CD4-positive, alpha-beta memory T cell (primary cell): ENCODE measurements at regions of chr13 and their contacts with region 1.

Region 1: DNA sequence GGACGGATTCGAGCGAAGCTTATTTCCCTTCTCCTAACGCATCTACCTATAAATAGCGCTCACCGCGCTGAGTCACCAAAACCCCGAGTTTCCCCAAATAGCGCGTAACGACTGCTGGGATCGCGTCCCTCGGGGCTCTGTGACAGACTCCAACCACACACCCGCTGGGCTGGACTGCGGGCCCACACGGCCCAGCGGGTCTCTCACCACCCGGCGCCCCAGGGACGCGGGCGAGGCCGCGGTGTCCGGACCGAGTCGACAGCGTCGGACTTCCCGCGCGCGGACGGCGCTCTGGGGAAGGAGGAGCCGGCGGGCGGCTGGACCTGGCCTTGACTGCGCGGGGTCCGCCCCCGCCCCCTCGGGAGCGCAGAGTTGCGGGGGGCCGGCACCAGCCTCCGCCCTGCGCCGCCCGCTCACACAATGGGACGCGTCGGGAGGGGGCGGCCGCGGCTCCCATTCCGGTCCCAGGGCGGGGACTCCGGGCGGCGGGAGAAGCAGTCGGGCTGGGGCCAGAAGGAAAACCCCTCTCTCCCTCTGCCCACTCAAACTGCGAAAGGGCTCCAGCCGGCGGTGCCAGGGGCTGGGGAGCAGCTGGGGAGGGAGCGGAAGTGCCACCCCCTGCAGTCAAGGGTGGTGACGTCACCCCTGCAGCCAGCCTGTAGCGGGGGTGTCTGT is 108.8 kb downstream of the KCNRG start:
- DNase-seq: peak in 4 of 5 donors; percentile 67 to 93 (median 74)
- H3K4me3 ChIP-seq: peak overlapping the region; percentile 48 to 92
- H3K4me3 Mint-ChIP-seq: peak overlapping the region; percentile 84 to 97 (median 91)
- H3K27ac ChIP-seq: peak overlapping the region; percentile 98
- H3K27ac Mint-ChIP-seq: peak overlapping the region; percentile 94 to 99 (median 97)
- H3K4me1 ChIP-seq: peaks cover 64% of the 10 kb centered on the region
- H3K4me1 Mint-ChIP-seq: peaks cover 36 to 70% (median 55%) of the 10 kb centered on the region in 4 donors
- H3K27me3 ChIP-seq: no peaks in the 10 kb centered on the region
- H3K27me3 Mint-ChIP-seq: peaks cover 3 to 10% of the 10 kb centered on the region in 2 donors

Region 2: DNA sequence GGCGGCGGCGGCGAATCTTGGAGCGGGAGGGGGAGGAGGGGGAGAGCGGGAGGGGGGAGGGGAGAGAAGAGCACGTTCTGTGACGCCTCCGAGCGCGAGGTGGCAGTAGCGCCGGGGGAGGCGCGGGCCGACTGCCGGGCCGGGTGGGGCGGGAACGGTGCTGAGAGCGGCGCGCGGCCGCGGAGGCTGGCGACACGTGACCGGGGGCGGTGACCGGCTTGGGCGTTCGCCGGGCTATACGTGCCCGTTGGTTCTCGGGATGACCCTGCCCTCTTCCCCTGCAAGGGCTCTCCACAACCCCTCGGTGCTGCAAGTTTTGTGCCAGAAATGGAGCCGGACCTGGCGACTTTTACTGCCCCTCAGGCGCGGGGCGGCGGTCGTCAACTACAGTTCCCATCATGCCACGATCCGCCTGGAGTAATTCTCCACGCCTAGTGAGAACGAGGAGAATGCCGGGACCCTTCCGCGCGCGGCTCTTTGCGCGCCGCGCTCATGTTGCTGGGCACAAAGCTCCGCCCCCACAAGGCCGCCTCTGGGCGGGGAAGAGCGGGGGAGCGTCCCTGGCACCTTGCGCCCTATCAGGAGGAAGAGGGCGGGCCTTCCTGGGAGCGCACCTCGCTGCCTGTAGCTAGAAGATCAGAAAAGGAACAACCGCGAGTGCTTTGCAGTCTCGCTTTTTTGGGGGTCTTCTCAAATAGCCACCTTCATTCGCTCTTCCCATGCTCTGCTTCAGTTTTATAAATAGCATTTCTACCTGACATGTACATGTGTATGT is 331.3 kb before region 1 on chr13 and contains the start of gene KPNA3:
- CTCF ChIA-PET with region 1: no interaction called
- POLR2A ChIA-PET with region 1: interaction called, 13 read pairs
- intact Hi-C with region 1: loop called (anchors 2 kb)
- DNase-seq: peak; percentile 94 to 96 (median 95)
- H3K4me3 ChIP-seq: peak within 1 kb of the TSS; percentile 74 to 80
- H3K4me3 Mint-ChIP-seq: peak within 1 kb of the TSS; percentile 96 to 99 (median 97)
- H3K27ac ChIP-seq: peak within 1 kb of the TSS; percentile 74
- H3K27ac Mint-ChIP-seq: peak within 1 kb of the TSS; percentile 92 to 98 (median 98)
- H3K4me1 ChIP-seq: peaks cover 37% of the 10 kb centered on the region
- H3K4me1 Mint-ChIP-seq: peaks cover 22 to 42% (median 36%) of the 10 kb centered on the region in 4 donors
- H3K27me3 ChIP-seq: no peaks in the 10 kb centered on the region
- H3K27me3 Mint-ChIP-seq: peaks cover 0 to 5% of the 10 kb centered on the region in 2 donors
- total RNA-seq, gene KPNA3: 21.1 to 22.4 TPM

Region 3: GRCh38 chr13:49954674-49955491 is 169.1 kb before region 1 on chr13:
- CTCF ChIA-PET with region 1: no interaction called
- POLR2A ChIA-PET with region 1: no interaction called
- intact Hi-C with region 1: no loop called
- DNase-seq: no peak
- H3K4me3 ChIP-seq: no peak overlapping the region
- H3K4me3 Mint-ChIP-seq: no peak overlapping the region
- H3K27ac ChIP-seq: no peak overlapping the region
- H3K27ac Mint-ChIP-seq: no peak overlapping the region
- H3K4me1 ChIP-seq: no peaks in the 10 kb centered on the region
- H3K4me1 Mint-ChIP-seq: no peaks in the 10 kb centered on the region
- H3K27me3 ChIP-seq: no peaks in the 10 kb centered on the region
- H3K27me3 Mint-ChIP-seq: peaks cover 3 to 4% of the 10 kb centered on the region in 2 donors

Region 4: GRCh38 chr13:50090212-50090611 is 33.8 kb before region 1 on chr13:
- CTCF ChIA-PET with region 1: interaction called, 252 read pairs
- POLR2A ChIA-PET with region 1: interaction called, 648 read pairs
- intact Hi-C with region 1: no loop called
- DNase-seq: no peak
- H3K4me3 ChIP-seq: no peak overlapping the region
- H3K4me3 Mint-ChIP-seq: no peak overlapping the region
- H3K27ac ChIP-seq: no peak overlapping the region
- H3K27ac Mint-ChIP-seq: no peak overlapping the region
- H3K4me1 ChIP-seq: peaks cover 27% of the 10 kb centered on the region
- H3K4me1 Mint-ChIP-seq: peaks cover 6 to 22% (median 8%) of the 10 kb centered on the region in 4 donors
- H3K27me3 ChIP-seq: no peaks in the 10 kb centered on the region
- H3K27me3 Mint-ChIP-seq: no peaks in the 10 kb centered on the region

Region 5: GRCh38 chr13:50152655-50153309 is 28.8 kb after region 1 on chr13:
- CTCF ChIA-PET with region 1: interaction called, 3 read pairs
- POLR2A ChIA-PET with region 1: interaction called, 23 read pairs
- intact Hi-C with region 1: loop called (anchors 2 kb)
- DNase-seq: peak in 1 of 5 donors; percentile 6
- H3K4me3 ChIP-seq: peak overlapping the region; percentile 25 to 27
- H3K4me3 Mint-ChIP-seq: peak overlapping the region; percentile 72 to 94 (median 84)
- H3K27ac ChIP-seq: peak overlapping the region; percentile 8
- H3K27ac Mint-ChIP-seq: peak overlapping the region; percentile 49 to 88 (median 81)
- H3K4me1 ChIP-seq: peaks cover 26% of the 10 kb centered on the region
- H3K4me1 Mint-ChIP-seq: peaks cover 17 to 27% (median 22%) of the 10 kb centered on the region in 4 donors
- H3K27me3 ChIP-seq: no peaks in the 10 kb centered on the region
- H3K27me3 Mint-ChIP-seq: no peaks in the 10 kb centered on the region

Region 6: DNA sequence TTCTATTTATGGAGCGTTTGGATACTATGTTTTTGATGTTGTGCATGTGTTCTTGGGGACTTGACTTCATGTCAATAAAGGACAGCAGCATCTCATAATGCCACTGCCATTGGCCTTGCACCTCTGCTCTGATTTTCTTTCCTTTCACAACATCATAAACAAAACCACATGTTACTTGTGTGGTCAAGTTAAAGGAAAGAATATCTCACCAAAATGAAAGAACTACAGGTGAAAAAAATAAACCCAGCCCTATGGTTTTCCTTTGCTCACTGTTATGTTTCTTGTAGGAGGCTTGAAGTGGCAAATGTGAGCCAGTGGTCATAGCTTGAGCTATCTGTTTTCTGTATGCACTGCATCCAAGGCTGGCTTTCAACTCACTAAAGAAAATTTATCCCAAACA is 131.6 kb after region 1 on chr13:
- CTCF ChIA-PET with region 1: interaction called, 4 read pairs
- POLR2A ChIA-PET with region 1: interaction called, 20 read pairs
- intact Hi-C with region 1: loop called (anchors 5 kb)
- DNase-seq: peak in 4 of 5 donors; percentile 36 to 44 (median 40)
- H3K4me3 ChIP-seq: peak overlapping the region in 1 of 2 donors; percentile 13
- H3K4me3 Mint-ChIP-seq: peak overlapping the region in 7 of 8 donors; percentile 47 to 83 (median 69)
- H3K27ac ChIP-seq: no peak overlapping the region
- H3K27ac Mint-ChIP-seq: peak overlapping the region in 5 of 7 donors; percentile 31 to 91 (median 63)
- H3K4me1 ChIP-seq: peaks cover 53% of the 10 kb centered on the region
- H3K4me1 Mint-ChIP-seq: peaks cover 42 to 68% (median 57%) of the 10 kb centered on the region in 4 donors
- H3K27me3 ChIP-seq: no peaks in the 10 kb centered on the region
- H3K27me3 Mint-ChIP-seq: no peaks in the 10 kb centered on the region

Region 7: GRCh38 chr13:50893211-50893852 is 769.3 kb after region 1 on chr13:
- CTCF ChIA-PET with region 1: interaction called, 3 read pairs
- POLR2A ChIA-PET with region 1: interaction called, 57 read pairs
- intact Hi-C with region 1: loop called (anchors 2 kb)
- DNase-seq: peak; percentile 43 to 71 (median 59)
- H3K4me3 ChIP-seq: peak overlapping the region; percentile 42 to 50
- H3K4me3 Mint-ChIP-seq: peak overlapping the region; percentile 69 to 85 (median 82)
- H3K27ac ChIP-seq: peak overlapping the region; percentile 69
- H3K27ac Mint-ChIP-seq: peak overlapping the region; percentile 78 to 97 (median 95)
- H3K4me1 ChIP-seq: peaks cover 45% of the 10 kb centered on the region
- H3K4me1 Mint-ChIP-seq: peaks cover 35 to 46% (median 39%) of the 10 kb centered on the region in 4 donors
- H3K27me3 ChIP-seq: no peaks in the 10 kb centered on the region
- H3K27me3 Mint-ChIP-seq: peaks cover 0 to 2% of the 10 kb centered on the region in 2 donors